Dorsolateral prefrontal cortex (tissue), 120 donors: ENCODE measurements at regions of chr20 and their contacts with region 1.

Region 1: DNA sequence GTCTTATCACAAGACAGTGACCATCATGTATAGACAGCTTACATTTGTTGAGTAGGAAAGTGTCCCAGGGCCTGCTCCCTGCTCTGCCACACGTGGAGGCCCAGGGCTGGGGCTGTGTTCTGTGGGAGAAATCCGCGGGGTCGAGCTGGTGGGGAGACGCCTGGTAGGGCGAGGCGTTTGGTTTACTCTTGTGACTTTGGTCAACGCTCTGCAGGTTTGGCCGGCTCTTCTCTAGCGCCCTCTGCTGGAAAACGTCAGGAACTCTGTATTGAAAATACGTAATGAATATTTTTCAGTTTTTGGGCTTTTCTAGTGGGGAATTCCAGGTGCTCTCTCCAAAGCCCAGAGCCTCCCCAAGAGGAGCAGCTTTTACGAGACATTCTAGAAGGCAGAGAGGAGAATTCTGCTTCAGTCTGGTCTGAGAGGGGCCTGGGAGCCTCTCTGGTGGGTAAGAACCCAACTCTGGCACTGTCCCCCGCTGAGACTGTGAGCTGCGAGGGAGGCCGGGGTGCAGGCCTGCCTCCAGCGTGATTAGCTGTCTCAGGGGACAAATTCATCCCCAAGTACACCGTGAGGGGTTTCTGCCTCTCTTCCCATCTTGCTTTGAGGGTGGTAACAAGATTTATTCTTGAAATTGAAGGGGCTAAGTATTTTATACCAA is 112.6 kb upstream of the RALGAPA2 start:
- DNase-seq: peak in 4 of 10 donors; percentile 36 to 64 (median 43)
- H3K4me3 ChIP-seq: peak overlapping the region in 2 of 59 donors; percentile 14 to 30
- H3K27ac ChIP-seq: no peak overlapping the region
- H3K27me3 ChIP-seq: peaks cover 0 to 11% (median 0%) of the 10 kb centered on the region in 45 donors
- CTCF ChIP-seq: peak; percentile 71 to 93 (median 84)

Region 2: DNA sequence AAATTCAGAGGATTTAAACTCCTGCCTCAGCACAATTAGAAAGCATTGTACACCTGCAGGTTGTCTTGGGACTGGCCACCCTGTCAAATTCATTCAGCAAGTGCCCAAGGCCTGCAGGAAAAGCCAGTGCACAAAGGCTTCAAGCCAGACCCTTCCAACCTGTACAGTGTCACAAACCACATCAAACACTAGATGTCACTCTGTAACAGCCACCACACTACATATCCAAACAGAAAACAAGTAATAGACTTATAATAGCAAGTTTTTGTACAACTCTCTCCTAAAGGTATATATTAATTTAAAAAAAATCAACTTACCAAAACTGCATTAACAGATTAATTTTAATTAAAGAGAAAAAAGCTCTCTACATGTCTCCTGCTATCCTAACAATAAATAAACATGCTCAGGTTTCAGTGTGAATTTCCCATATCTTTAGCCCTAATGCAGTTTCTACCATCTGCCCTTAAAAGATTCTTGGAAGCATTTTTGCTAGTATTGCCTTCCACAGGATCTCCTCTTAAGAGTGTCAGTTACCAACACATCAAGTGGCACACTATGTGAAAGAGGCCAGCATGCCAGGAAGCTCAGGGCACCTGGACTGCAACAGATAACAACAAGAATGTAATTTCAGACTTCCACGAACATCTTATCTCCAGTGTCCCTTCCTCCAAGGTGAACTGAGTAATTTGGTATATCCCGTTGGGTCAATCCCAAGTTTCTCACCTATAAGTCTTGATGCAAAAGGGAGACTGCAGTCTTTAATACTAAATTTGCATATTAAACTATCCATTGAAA is 160.1 kb before region 1 on chr20:
- intact Hi-C with region 1: loop called (anchors 2 to 5 kb)
- DNase-seq: no peak
- H3K4me3 ChIP-seq: no peak overlapping the region
- H3K27ac ChIP-seq: no peak overlapping the region
- H3K27me3 ChIP-seq: no peaks in the 10 kb centered on the region
- CTCF ChIP-seq: peak in 55 of 56 donors; percentile 20 to 78 (median 59)

Region 3: DNA sequence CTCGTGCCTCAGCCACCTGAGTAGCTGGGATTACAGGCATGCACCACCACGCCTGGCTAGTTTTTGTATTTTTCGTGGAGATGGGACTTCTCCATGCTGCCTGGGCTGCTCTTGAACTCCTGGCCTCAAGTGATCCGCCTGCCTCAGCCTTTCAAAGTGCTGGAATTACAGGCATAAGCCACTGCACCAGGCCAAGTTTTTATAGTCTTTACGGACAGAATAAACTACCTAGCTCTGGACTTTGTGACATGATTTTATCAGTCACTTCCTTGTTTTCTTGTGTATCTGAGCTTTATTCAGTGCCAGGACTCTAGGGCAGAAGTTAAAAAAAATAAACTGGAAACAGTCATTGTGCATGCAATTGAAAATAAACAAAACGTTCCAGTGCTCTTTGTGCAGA is 65.9 kb before region 1 on chr20:
- intact Hi-C with region 1: no loop called
- DNase-seq: no peak
- H3K4me3 ChIP-seq: no peak overlapping the region
- H3K27ac ChIP-seq: peak overlapping the region in 25 of 59 donors; percentile 5 to 75 (median 48)
- H3K27me3 ChIP-seq: peaks cover 0 to 4% (median 0%) of the 10 kb centered on the region in 45 donors
- CTCF ChIP-seq: no peak

Region 4: GRCh38 chr20:20864351-20865096 is 39.5 kb after region 1 on chr20:
- intact Hi-C with region 1: no loop called
- DNase-seq: no peak
- H3K4me3 ChIP-seq: no peak overlapping the region
- H3K27ac ChIP-seq: no peak overlapping the region
- H3K27me3 ChIP-seq: peaks cover 0 to 8% (median 0%) of the 10 kb centered on the region in 45 donors
- CTCF ChIP-seq: peak in 53 of 56 donors; percentile 24 to 70 (median 46)